Panc1 (cell line): ENCODE measurements at regions of chr3 and their contacts with region 1.

Region 1: GRCh38 chr3:126782554-126782953 is 78.5 kb downstream of the CHCHD6 start:
- DNase-seq: peak; percentile 15
- ATAC-seq: 0 out of 2 replicates have a peak, but pooled peaks have one; percentile 53
- H3K4me3 ChIP-seq: no peak overlapping the region
- H3K27ac ChIP-seq: peak overlapping the region; percentile 44; the same call in 1 of the 2 replicates
- H3K4me1 ChIP-seq: no peaks in the 10 kb centered on the region
- H3K27me3 ChIP-seq: no peaks in the 10 kb centered on the region
- CTCF ChIP-seq: no peak

Region 2: GRCh38 chr3:127374086-127375010 is 591.8 kb after region 1 on chr3:
- CTCF ChIA-PET with region 1: no interaction called
- POLR2A ChIA-PET with region 1: interaction called, 10 read pairs
- in situ Hi-C with region 1: no loop called
- intact Hi-C with region 1: no loop called
- DNase-seq: no peak
- ATAC-seq: peak; percentile 69
- H3K4me3 ChIP-seq: no peak overlapping the region
- H3K27ac ChIP-seq: no peak overlapping the region
- H3K4me1 ChIP-seq: no peaks in the 10 kb centered on the region
- H3K27me3 ChIP-seq: peaks cover 10% of the 10 kb centered on the region; the same call in 1 of the 2 replicates
- CTCF ChIP-seq: peak; percentile 86